ENCODE measurements at regions of chr1 and their contacts with region 1.

Region 1: DNA sequence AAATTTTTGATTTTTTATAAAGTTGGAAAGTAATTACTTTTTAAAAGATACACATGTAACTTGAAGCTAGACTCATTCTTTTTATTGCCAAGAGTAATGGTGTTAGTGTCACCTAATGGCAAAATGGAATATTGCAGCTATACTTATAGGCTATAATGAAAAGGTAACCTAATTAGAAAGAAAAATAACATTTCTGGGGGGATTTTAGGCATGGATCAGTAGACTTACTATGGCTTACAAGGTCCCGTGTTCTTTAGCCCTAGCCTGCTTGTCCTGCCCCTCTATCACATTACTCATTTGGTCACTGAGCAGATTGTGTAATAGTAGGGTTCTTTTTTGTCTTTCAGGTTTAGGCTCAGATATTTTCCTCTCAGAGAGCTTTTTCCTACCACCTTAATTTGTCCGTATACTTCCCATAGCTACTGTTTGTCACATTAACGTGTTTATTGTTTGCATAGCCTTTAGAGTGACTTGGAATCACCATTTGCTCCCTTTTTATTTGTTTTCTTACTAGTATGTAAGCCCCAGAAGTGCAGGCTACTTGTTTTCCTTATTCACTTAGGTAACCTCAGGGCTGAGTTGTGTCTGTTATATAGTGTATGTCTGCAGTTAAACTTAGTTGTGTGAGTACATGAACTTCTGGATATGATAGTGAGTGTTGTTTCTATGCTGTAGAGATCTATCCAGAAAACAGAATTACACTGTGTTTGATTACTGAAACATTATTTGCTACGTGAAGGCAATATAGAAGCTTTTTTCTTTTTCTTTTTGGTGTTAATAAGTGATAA is 58.7 kb downstream of the RABGAP1L start:
- DNase-seq: peak; percentile 21
- ATAC-seq: peak; percentile 64
- H3K4me3 ChIP-seq: no peak overlapping the region
- H3K27ac ChIP-seq: peak overlapping the region; percentile 16
- H3K4me1 ChIP-seq: peaks cover 13% of the 10 kb centered on the region
- H3K27me3 ChIP-seq: no peaks in the 10 kb centered on the region
- CTCF ChIP-seq: peak; percentile 49
- EP300 ChIP-seq: no peak
- POLR2A ChIP-seq: no peak
- RAD21 ChIP-seq: peak; percentile 46; the same call in 1 of the 2 replicates

Region 2: GRCh38 chr1:173420330-173420806 is 797.6 kb before region 1 on chr1:
- CTCF ChIA-PET with region 1: no interaction called
- POLR2A ChIA-PET with region 1: no interaction called
- in situ Hi-C with region 1: no loop called
- intact Hi-C with region 1: loop called (anchors 2 kb)
- DNase-seq: peak; percentile 64
- ATAC-seq: peak; percentile 90
- H3K4me3 ChIP-seq: no peak overlapping the region
- H3K27ac ChIP-seq: no peak overlapping the region
- H3K4me1 ChIP-seq: no peaks in the 10 kb centered on the region
- H3K27me3 ChIP-seq: no peaks in the 10 kb centered on the region
- CTCF ChIP-seq: peak; percentile 83
- EP300 ChIP-seq: no peak
- POLR2A ChIP-seq: no peak
- RAD21 ChIP-seq: peak; percentile 77

Region 3: DNA sequence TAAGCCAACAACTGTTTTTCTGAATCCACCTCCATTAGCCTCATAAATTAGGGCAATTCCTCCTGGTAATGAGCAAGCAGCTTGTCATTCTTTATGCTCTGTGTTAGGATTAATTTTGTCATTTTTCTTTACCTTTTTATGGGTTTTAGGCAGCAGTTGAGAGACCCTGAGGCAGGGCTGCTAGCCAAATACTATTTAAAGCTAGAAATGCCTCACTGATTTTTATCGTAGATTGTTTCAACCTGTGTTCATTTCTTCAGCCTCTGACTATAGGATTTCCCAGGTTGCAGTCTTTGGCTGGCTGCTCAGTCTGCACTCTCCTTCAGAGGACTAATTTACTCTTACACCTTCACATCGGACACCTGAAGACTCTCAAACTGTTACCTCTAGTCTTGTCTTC is 120.6 kb before region 1 on chr1:
- CTCF ChIA-PET with region 1: no interaction called
- POLR2A ChIA-PET with region 1: no interaction called
- in situ Hi-C with region 1: loop called (anchors 10 kb)
- intact Hi-C with region 1: loop called (anchors 5 kb)
- DNase-seq: no peak
- ATAC-seq: no peak
- H3K4me3 ChIP-seq: no peak overlapping the region
- H3K27ac ChIP-seq: no peak overlapping the region
- H3K4me1 ChIP-seq: no peaks in the 10 kb centered on the region
- H3K27me3 ChIP-seq: no peaks in the 10 kb centered on the region
- CTCF ChIP-seq: no peak
- EP300 ChIP-seq: no peak
- POLR2A ChIP-seq: no peak
- RAD21 ChIP-seq: no peak

Region 4: GRCh38 chr1:174142836-174143235 is 75.1 kb before region 1 on chr1:
- CTCF ChIA-PET with region 1: no interaction called
- POLR2A ChIA-PET with region 1: no interaction called
- in situ Hi-C with region 1: no loop called
- intact Hi-C with region 1: loop called (anchors 1 kb)
- DNase-seq: no peak
- ATAC-seq: no peak
- H3K4me3 ChIP-seq: no peak overlapping the region
- H3K27ac ChIP-seq: no peak overlapping the region
- H3K4me1 ChIP-seq: peaks cover 9% of the 10 kb centered on the region
- H3K27me3 ChIP-seq: no peaks in the 10 kb centered on the region
- CTCF ChIP-seq: no peak
- EP300 ChIP-seq: no peak
- POLR2A ChIP-seq: no peak
- RAD21 ChIP-seq: no peak